ENCODE measurements at regions of chr5 and their contacts with region 1.

Region 1: DNA sequence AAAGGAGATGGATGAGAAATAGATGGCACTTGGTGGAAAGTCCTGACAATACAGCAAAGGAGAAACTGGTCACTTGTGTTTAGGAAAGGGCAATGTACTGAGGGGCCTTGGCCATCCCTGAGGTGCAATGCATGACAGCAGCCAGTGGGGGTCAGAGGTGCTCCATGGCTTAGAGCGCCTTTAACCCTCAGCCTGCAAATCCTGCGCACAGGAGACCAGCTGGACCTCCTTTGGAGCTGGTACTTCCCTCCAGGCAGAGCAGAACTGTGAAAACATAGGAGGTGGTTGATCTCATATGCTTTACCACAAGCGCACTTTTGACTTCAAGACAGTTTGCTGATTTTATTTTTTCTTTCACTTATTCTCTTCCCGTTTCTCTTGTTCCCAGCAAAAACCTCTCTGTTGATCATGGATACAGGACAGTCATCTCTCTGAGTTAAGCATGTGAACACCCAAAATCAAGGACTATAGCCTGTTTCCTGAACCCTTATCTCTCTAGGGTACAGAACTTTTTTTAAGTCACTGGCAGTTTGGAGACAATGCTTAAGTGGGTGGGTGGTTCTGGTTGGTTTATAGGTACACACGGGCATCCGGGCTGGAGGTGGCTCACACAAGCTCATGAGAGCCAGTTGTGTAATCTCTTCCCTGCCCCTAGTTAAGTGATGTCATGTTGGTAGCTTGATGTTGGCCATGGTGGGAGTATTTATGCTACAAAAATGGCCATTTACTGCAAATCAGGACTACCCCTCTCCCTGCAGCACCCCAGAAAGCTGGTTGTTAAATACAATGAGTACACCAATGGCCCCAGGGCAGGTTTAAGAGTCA is 37.6 kb upstream of the ANKRD55 start:
- DNase-seq: peak; percentile 83 to 93 (median 86)
- ATAC-seq: peak; percentile 100
- H3K4me3 ChIP-seq: no peak overlapping the region
- H3K27ac ChIP-seq: no peak overlapping the region
- H3K4me1 ChIP-seq: peaks cover 4 to 14% of the 10 kb centered on the region in 2 donors
- H3K27me3 ChIP-seq: no peaks in the 10 kb centered on the region
- CTCF ChIP-seq: peak; percentile 96 to 97

Region 2: GRCh38 chr5:56409331-56410190 is 138.8 kb after region 1 on chr5:
- intact Hi-C with region 1: no loop called
- DNase-seq: no peak
- ATAC-seq: peak; percentile 30
- H3K4me3 ChIP-seq: no peak overlapping the region
- H3K27ac ChIP-seq: no peak overlapping the region
- H3K4me1 ChIP-seq: peaks cover 7 to 39% of the 10 kb centered on the region in 2 donors
- H3K27me3 ChIP-seq: no peaks in the 10 kb centered on the region
- CTCF ChIP-seq: no peak

Region 3: GRCh38 chr5:56838409-56839039 is 567.7 kb after region 1 on chr5:
- intact Hi-C with region 1: loop called in 1 of 2 experiments (anchors 5 kb)
- DNase-seq: no peak
- ATAC-seq: peak; percentile 83
- H3K4me3 ChIP-seq: no peak overlapping the region
- H3K27ac ChIP-seq: peak overlapping the region; percentile 5 to 65
- H3K4me1 ChIP-seq: peaks cover 15 to 60% of the 10 kb centered on the region in 2 donors
- H3K27me3 ChIP-seq: no peaks in the 10 kb centered on the region
- CTCF ChIP-seq: peak; percentile 32 to 41

Measured in left lung (tissue), 14 donors.